Kidney (tissue), 22 donors: ENCODE measurements at regions of chr17 and their contacts with region 1.

Region 1: DNA sequence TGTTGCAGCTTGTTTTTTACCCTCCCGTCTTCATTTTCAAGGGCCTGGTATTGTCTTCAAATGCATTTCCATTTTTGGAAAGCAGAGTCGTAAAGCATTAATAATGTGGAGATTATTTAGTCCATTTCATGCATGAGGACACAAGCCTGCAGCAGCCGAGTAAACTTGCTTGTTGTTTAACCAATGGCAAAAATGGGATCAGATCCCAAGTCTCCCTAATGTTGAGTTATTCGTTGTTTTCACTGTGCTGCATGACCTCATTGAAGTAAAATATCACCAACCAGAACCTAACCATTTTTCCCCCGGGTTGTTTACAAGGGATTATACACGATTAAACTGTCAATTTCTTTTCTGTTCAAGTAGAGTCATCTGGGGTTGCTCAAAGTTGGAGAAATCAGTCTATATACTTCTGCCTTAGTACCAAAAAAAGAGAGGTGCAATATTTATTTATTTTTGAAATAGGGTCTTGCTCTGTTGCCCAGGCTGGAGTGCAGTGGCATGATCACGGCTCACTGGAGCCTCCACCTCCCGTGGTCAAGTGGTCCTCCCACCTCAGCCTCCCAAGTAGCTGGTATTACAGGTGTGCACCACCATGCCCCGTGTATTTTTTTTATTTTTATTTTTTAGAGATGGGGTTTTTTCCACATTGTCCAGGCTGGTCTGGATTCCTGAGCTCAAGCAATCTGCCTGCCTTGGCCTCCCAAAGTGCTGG is 12.4 kb downstream of the AMZ2 start:
- DNase-seq: peak in 2 of 5 donors; percentile 50 to 65
- H3K4me3 ChIP-seq: peak overlapping the region in 1 of 3 donors; percentile 6
- H3K27ac ChIP-seq: peak overlapping the region in 1 of 2 donors; percentile 54
- H3K4me1 ChIP-seq: peaks cover 0 to 3% (median 0%) of the 10 kb centered on the region in 3 donors
- H3K27me3 ChIP-seq: no peaks in the 10 kb centered on the region
- CTCF ChIP-seq: no peak

Region 2: DNA sequence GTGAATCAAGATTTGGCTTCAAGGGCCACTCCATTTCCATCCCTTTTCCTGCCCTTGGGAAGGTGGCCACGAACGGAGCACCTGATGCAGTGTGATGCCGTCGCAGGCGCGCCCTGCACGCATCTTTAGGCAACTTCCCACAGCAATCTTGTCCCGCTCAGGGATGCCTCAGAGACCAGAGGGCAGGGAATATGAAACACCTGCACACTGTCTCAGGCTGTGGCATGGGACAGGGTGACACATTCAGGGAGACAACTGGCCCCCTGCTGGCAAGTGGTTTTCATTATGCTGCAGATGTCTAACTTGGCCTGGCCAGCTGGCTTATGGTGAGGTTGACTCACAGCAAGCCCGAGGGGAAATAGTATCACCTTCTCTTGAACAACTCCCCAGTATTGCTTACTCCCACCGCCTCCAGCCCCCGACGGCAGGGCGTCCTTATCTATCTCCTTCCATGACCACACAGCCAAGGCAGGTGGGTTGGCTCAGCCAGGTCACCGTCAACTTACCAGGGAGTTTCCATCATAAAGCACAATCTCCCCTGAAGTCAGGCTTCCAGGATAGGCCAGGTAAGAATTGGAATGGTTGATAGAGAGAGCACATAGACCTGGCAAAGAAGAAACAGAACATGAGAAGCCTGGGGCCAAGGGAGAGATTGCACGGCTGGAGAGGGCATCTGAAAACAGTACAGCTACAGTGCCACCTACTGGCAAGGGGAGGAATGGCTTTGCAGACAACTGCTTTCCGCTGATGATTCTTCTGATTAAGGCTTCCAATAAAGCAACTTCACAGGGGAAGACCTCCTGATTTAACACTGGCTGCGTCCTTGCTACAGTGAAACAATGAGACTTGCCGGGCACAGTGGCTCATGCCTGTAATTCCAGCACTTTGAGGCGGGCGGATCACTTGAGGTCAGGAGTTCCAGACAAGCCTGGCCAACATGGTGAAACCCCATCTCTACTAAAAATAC is 176.0 kb after region 1 on chr17:
- intact Hi-C with region 1: loop called (anchors 10 kb)
- DNase-seq: peak in 4 of 5 donors; percentile 80 to 88 (median 86)
- H3K4me3 ChIP-seq: no peak overlapping the region
- H3K27ac ChIP-seq: no peak overlapping the region
- H3K4me1 ChIP-seq: peaks cover 0 to 11% (median 7%) of the 10 kb centered on the region in 3 donors
- H3K27me3 ChIP-seq: no peaks in the 10 kb centered on the region
- CTCF ChIP-seq: peak; percentile 93